AG04450 (cell line): ENCODE measurements at regions of chr4 and their contacts with region 1.

Region 1: GRCh38 chr4:53706422-53707032 is 115.2 kb upstream of the LNX1 start:
- DNase-seq: no peak
- H3K4me3 ChIP-seq: no peak overlapping the region
- H3K27ac ChIP-seq: no peak overlapping the region
- H3K27me3 ChIP-seq: no peaks in the 10 kb centered on the region
- CTCF ChIP-seq: peak; percentile 74

Region 2: GRCh38 chr4:53119680-53120079 is 586.8 kb before region 1 on chr4:
- CTCF ChIA-PET with region 1: no interaction called
- POLR2A ChIA-PET with region 1: no interaction called
- DNase-seq: peak; percentile 36
- H3K4me3 ChIP-seq: no peak overlapping the region
- H3K27ac ChIP-seq: peak overlapping the region; percentile 31
- H3K27me3 ChIP-seq: no peaks in the 10 kb centered on the region
- CTCF ChIP-seq: no peak

Region 3: GRCh38 chr4:53777244-53777984 is 70.9 kb after region 1 on chr4:
- CTCF ChIA-PET with region 1: interaction called, 14 read pairs
- POLR2A ChIA-PET with region 1: no interaction called
- DNase-seq: peak; percentile 59
- H3K4me3 ChIP-seq: no peak overlapping the region
- H3K27ac ChIP-seq: peak overlapping the region; percentile 76
- H3K27me3 ChIP-seq: no peaks in the 10 kb centered on the region
- CTCF ChIP-seq: no peak

Region 4: GRCh38 chr4:54233277-54233696 is 526.8 kb after region 1 on chr4:
- CTCF ChIA-PET with region 1: interaction called, 23 read pairs
- POLR2A ChIA-PET with region 1: no interaction called
- DNase-seq: peak; percentile 61
- H3K4me3 ChIP-seq: peak overlapping the region; percentile 97
- H3K27ac ChIP-seq: peak overlapping the region; percentile 73
- H3K27me3 ChIP-seq: no peaks in the 10 kb centered on the region
- CTCF ChIP-seq: peak; percentile 72